ENCODE measurements at regions of chr3 and their contacts with region 1.

Region 1: GRCh38 chr3:157429708-157430107 is 6.9 kb upstream of the PTX3 start:
- DNase-seq: peak; percentile 72
- H3K4me3 ChIP-seq: no peak overlapping the region
- H3K27ac ChIP-seq: no peak overlapping the region
- H3K4me1 ChIP-seq: peaks cover 14% of the 10 kb centered on the region
- H3K27me3 ChIP-seq: no peaks in the 10 kb centered on the region
- CTCF ChIP-seq: no peak
- POLR2A ChIP-seq: no peak

Region 2: GRCh38 chr3:157290766-157291165 is 138.9 kb before region 1 on chr3:
- CTCF ChIA-PET with region 1: no interaction called
- POLR2A ChIA-PET with region 1: no interaction called
- dilution Hi-C with region 1: no loop called
- intact Hi-C with region 1: no loop called
- DNase-seq: no peak
- H3K4me3 ChIP-seq: no peak overlapping the region
- H3K27ac ChIP-seq: no peak overlapping the region
- H3K4me1 ChIP-seq: peaks cover 10% of the 10 kb centered on the region
- H3K27me3 ChIP-seq: no peaks in the 10 kb centered on the region
- CTCF ChIP-seq: no peak
- POLR2A ChIP-seq: no peak

Region 3: GRCh38 chr3:157388976-157389375 is 40.7 kb before region 1 on chr3:
- CTCF ChIA-PET with region 1: no interaction called
- POLR2A ChIA-PET with region 1: no interaction called
- dilution Hi-C with region 1: no loop called
- intact Hi-C with region 1: loop called (anchors 5 kb)
- DNase-seq: peak; percentile 61
- H3K4me3 ChIP-seq: no peak overlapping the region
- H3K27ac ChIP-seq: peak overlapping the region; percentile 47
- H3K4me1 ChIP-seq: peaks cover 21% of the 10 kb centered on the region
- H3K27me3 ChIP-seq: no peaks in the 10 kb centered on the region
- CTCF ChIP-seq: no peak
- POLR2A ChIP-seq: no peak